ENCODE measurements at regions of chr3 and their contacts with region 1.

Region 1: DNA sequence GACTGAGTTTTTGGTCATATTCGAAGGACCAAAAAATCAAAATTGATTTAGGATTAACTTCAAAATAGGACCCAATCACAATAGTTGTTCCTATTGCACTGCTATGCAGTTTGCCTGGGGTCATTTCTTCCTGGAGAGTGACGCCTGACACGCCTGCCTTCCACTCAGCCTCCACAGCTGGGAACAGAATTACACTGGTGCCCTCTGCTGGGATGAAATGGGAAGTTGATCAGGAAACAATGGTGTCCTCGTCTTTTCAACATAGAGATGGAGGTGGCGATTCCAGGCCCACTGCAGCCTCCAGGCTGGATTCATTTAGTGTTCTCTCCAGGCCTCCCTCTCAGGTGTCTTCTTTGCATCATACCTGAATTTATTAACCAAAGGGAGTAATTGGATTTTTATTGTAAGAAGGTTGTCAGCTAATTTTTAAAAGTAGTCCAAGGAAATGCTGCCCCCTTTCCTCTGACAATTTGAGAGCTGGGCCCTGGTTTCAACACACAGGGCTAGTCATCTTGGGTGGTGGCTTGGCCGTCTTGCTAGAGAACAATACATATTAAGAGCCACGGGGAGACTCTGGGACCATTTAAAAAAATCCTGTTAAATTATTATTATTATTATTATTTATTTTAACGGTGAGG is 69.7 kb downstream of the GAP43 start:
- DNase-seq: peak; percentile 38 to 69 (median 48)
- ATAC-seq: peak; percentile 98
- H3K4me3 ChIP-seq: no peak overlapping the region
- H3K27ac ChIP-seq: no peak overlapping the region
- H3K4me1 ChIP-seq: no peaks in the 10 kb centered on the region
- H3K27me3 ChIP-seq: no peaks in the 10 kb centered on the region
- CTCF ChIP-seq: peak; percentile 63 to 78 (median 76)
- EP300 ChIP-seq: no peak
- POLR2A ChIP-seq: no peak
- RAD21 ChIP-seq: peak; percentile 82 to 90

Region 2: DNA sequence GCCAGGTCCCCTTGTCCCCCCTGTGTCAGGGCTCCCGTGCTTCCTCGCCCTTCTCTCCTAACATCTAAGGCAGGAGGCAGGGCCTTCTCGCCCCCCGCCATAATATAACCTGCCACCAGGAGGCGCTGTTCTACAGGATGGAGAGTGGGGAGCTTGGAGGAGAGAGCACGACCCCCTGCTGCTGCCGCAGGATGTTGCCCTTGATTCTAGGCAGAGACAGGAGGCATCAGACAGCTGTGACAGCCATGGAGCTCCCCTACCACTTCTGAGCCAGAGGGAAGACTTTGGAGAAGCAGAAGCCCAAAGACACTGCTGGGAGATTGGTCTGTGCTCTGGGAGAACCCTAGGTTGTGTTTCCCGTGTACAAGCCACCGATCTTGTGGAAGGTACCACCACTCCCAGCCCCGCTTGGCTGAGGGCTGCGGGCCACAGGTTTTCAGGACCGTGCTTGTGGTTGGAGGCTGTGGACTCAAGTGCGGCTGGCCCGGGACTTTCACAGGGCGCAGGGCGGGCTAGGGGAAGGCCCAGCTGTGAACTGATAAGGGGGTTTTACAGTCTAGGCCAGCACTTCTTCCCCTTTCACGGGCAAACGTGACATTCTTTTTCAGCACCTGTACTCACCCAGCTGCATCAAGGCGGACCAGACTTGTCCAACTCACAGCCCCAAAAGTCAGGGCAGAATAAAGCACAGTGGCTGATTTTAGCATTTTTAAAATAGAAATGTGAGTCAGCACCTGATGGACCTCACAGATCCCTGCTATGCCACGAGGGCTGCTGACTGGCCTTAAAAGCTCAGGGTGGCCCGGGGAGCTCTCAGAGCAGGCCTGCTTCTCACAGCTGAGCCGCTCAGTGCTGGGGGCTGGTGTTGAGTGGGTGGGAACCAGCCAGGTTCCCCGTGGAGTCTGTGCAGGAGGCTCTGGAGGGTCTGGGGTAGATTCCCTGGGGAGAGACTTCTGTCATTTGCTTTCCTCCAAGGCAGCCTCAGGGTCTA is 1401.8 kb before region 1 on chr3:
- CTCF ChIA-PET with region 1: no interaction called
- POLR2A ChIA-PET with region 1: no interaction called
- in situ Hi-C with region 1: no loop called
- intact Hi-C with region 1: no loop called
- DNase-seq: peak; percentile 65 to 74 (median 70)
- ATAC-seq: peak; percentile 94
- H3K4me3 ChIP-seq: no peak overlapping the region
- H3K27ac ChIP-seq: no peak overlapping the region
- H3K4me1 ChIP-seq: peaks cover 0 to 10% of the 10 kb centered on the region in 2 experiments; a peak in 2 of 5 replicates
- H3K27me3 ChIP-seq: no peaks in the 10 kb centered on the region
- CTCF ChIP-seq: peak; percentile 67 to 88 (median 76)
- EP300 ChIP-seq: no peak
- POLR2A ChIP-seq: no peak
- RAD21 ChIP-seq: peak; percentile 17 to 62; a peak in 3 of 4 replicates

Region 3: DNA sequence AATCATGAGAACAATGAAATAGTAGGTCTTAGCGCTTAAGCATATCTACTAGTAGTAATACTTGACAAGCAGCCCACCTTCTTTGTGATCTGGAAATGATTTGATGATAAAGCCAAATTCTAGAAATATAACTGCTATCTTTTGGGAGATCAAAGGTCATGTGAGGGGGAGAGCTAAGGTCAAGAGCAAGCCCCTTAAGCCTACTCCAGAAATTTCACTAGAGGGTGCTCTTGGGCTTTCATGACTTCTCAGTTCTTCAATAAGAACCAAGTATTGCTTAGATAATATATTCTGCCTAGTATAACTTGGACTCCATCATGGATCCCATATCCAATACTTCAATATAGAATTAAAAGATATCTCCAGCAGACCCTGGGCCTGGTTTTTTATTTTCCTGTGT is 865.5 kb before region 1 on chr3:
- CTCF ChIA-PET with region 1: interaction called, 7 read pairs
- POLR2A ChIA-PET with region 1: no interaction called
- in situ Hi-C with region 1: no loop called
- intact Hi-C with region 1: loop called (anchors 10 kb)
- DNase-seq: peak; percentile 11 to 31 (median 28)
- ATAC-seq: peak; percentile 70; the same call in 1 of the 3 replicates
- H3K4me3 ChIP-seq: no peak overlapping the region
- H3K27ac ChIP-seq: no peak overlapping the region
- H3K4me1 ChIP-seq: no peaks in the 10 kb centered on the region
- H3K27me3 ChIP-seq: no peaks in the 10 kb centered on the region
- CTCF ChIP-seq: peak; percentile 20 to 53 (median 39); a peak in 3 of 6 replicates
- EP300 ChIP-seq: no peak
- POLR2A ChIP-seq: no peak
- RAD21 ChIP-seq: peak; percentile 77 to 79

Region 4: GRCh38 chr3:115092220-115092791 is 600.7 kb before region 1 on chr3:
- CTCF ChIA-PET with region 1: no interaction called
- POLR2A ChIA-PET with region 1: no interaction called
- in situ Hi-C with region 1: no loop called
- intact Hi-C with region 1: loop called (anchors 2 kb)
- DNase-seq: peak in 3 of 4 experiments; percentile 2 to 47 (median 17)
- ATAC-seq: peak; percentile 91
- H3K4me3 ChIP-seq: no peak overlapping the region
- H3K27ac ChIP-seq: no peak overlapping the region
- H3K4me1 ChIP-seq: no peaks in the 10 kb centered on the region
- H3K27me3 ChIP-seq: no peaks in the 10 kb centered on the region
- CTCF ChIP-seq: peak; percentile 32 to 67 (median 49); a peak in 4 of 6 replicates
- EP300 ChIP-seq: no peak
- POLR2A ChIP-seq: no peak
- RAD21 ChIP-seq: peak; percentile 53 to 63

Region 5: GRCh38 chr3:115217678-115218451 is 475.1 kb before region 1 on chr3:
- CTCF ChIA-PET with region 1: interaction called, 4 read pairs
- POLR2A ChIA-PET with region 1: no interaction called
- in situ Hi-C with region 1: loop called (anchors 25 kb)
- intact Hi-C with region 1: loop called (anchors 1 kb)
- DNase-seq: peak in 3 of 4 experiments; percentile 6 to 33 (median 8)
- ATAC-seq: peak; percentile 70; the same call in 2 of the 3 replicates
- H3K4me3 ChIP-seq: no peak overlapping the region
- H3K27ac ChIP-seq: no peak overlapping the region
- H3K4me1 ChIP-seq: no peaks in the 10 kb centered on the region
- H3K27me3 ChIP-seq: no peaks in the 10 kb centered on the region
- CTCF ChIP-seq: peak; percentile 23 to 68 (median 44); a peak in 5 of 6 replicates
- EP300 ChIP-seq: no peak
- POLR2A ChIP-seq: no peak
- RAD21 ChIP-seq: peak; percentile 80 to 85

Region 6: DNA sequence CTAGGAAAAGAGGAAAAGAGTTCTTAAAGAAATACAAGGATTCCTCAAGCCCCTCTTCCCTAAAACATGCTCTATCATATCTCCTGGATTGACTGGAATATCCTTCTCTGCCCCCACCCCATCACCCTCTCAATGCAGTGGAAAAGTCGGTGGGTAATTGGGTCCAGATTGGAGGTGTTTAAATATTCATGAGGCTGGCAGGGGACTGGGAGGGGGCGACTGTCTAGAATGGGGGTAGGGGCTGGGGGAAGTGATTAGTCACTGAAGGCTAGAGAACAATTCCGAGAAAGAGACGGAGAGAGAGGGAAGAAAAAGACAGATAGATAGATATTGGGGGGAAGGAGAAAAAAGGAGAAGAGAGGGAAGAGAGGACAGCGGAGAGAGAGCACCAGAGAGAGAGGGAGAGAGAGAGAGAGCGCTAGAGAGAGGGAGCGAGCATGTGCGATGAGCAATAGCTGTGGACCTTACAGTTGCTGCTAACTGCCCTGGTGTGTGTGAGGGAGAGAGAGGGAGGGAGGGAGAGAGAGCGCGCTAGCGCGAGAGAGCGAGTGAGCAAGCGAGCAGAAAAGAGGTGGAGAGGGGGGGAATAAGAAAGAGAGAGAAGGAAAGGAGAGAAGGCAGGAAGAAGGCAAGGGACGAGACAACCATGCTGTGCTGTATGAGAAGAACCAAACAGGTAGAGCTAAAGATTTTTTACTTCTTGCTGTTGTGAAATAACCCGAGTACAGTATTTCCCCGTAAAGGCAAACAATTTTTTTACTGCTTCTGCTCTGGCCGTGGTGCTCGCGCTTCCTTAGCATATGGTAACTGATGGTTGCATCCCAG is 69.8 kb before region 1 on chr3 and contains the start of gene GAP43:
- CTCF ChIA-PET with region 1: no interaction called
- POLR2A ChIA-PET with region 1: no interaction called
- in situ Hi-C with region 1: no loop called
- intact Hi-C with region 1: loop called (anchors 10 kb)
- DNase-seq: no peak
- ATAC-seq: no peak
- H3K4me3 ChIP-seq: no peak within 1 kb of the TSS
- H3K27ac ChIP-seq: no peak within 1 kb of the TSS
- H3K4me1 ChIP-seq: no peaks in the 10 kb centered on the region
- H3K27me3 ChIP-seq: no peaks in the 10 kb centered on the region; a peak in 1 of 5 replicates
- CTCF ChIP-seq: no peak
- EP300 ChIP-seq: no peak
- POLR2A ChIP-seq: no peak
- RAD21 ChIP-seq: no peak
- polyA plus RNA-seq, gene GAP43: not detected

Region 7: GRCh38 chr3:115783938-115784738 is 91.1 kb after region 1 on chr3:
- CTCF ChIA-PET with region 1: interaction called, 8 read pairs
- POLR2A ChIA-PET with region 1: no interaction called
- in situ Hi-C with region 1: no loop called
- intact Hi-C with region 1: loop called (anchors 1 kb)
- DNase-seq: peak; percentile 79 to 89 (median 82)
- ATAC-seq: peak; percentile 97
- H3K4me3 ChIP-seq: peak overlapping the region; percentile 52
- H3K27ac ChIP-seq: peak overlapping the region; percentile 72; the same call in 2 of the 3 replicates
- H3K4me1 ChIP-seq: peaks cover 3 to 8% of the 10 kb centered on the region in 2 experiments; a peak in 2 of 5 replicates
- H3K27me3 ChIP-seq: no peaks in the 10 kb centered on the region
- CTCF ChIP-seq: peak; percentile 81 to 90 (median 83)
- EP300 ChIP-seq: no peak
- POLR2A ChIP-seq: no peak
- RAD21 ChIP-seq: peak; percentile 65

Region 8: GRCh38 chr3:115814778-115815380 is 121.9 kb after region 1 on chr3:
- CTCF ChIA-PET with region 1: no interaction called
- POLR2A ChIA-PET with region 1: interaction called, 3 read pairs
- in situ Hi-C with region 1: no loop called
- intact Hi-C with region 1: loop called (anchors 1 kb)
- DNase-seq: peak; percentile 46 to 62 (median 58)
- ATAC-seq: peak; percentile 75
- H3K4me3 ChIP-seq: no peak overlapping the region
- H3K27ac ChIP-seq: no peak overlapping the region
- H3K4me1 ChIP-seq: no peaks in the 10 kb centered on the region
- H3K27me3 ChIP-seq: peaks cover 0 to 5% of the 10 kb centered on the region in 2 experiments; a peak in 1 of 5 replicates
- CTCF ChIP-seq: peak; percentile 59 to 78 (median 69); a peak in 5 of 6 replicates
- EP300 ChIP-seq: no peak
- POLR2A ChIP-seq: no peak
- RAD21 ChIP-seq: peak; percentile 59 to 74